WTC11 (cell line): ENCODE measurements at regions of chr15 and their contacts with region 1.

Region 1: GRCh38 chr15:75578948-75579920 is at the start of gene PTPN9:
- DNase-seq: peak; percentile 94
- ATAC-seq: peak; percentile 83
- H3K4me3 Mint-ChIP-seq: peak within 1 kb of the TSS; percentile 97
- H3K27ac Mint-ChIP-seq: peak within 1 kb of the TSS; percentile 96
- H3K4me1 Mint-ChIP-seq: peaks cover 26% of the 10 kb centered on the region
- H3K27me3 Mint-ChIP-seq: no peaks in the 10 kb centered on the region
- CTCF ChIP-seq: no peak
- total RNA-seq, gene PTPN9: 36.1 to 45.5 TPM (median 36.6 TPM) in 3 replicates

Region 2: GRCh38 chr15:75625542-75626347 is 46.5 kb after region 1 on chr15 and contains the start of gene SNUPN:
- CTCF ChIA-PET with region 1: interaction called, 11 read pairs
- POLR2A ChIA-PET with region 1: no interaction called
- DNase-seq: peak; percentile 96
- ATAC-seq: peak; percentile 88
- H3K4me3 Mint-ChIP-seq: peak within 1 kb of the TSS; percentile 91
- H3K27ac Mint-ChIP-seq: peak within 1 kb of the TSS; percentile 98
- H3K4me1 Mint-ChIP-seq: peaks cover 12% of the 10 kb centered on the region
- H3K27me3 Mint-ChIP-seq: no peaks in the 10 kb centered on the region
- CTCF ChIP-seq: no peak
- total RNA-seq, gene SNUPN: 25.9 to 28.4 TPM (median 27.9 TPM) in 3 replicates

Region 3: DNA sequence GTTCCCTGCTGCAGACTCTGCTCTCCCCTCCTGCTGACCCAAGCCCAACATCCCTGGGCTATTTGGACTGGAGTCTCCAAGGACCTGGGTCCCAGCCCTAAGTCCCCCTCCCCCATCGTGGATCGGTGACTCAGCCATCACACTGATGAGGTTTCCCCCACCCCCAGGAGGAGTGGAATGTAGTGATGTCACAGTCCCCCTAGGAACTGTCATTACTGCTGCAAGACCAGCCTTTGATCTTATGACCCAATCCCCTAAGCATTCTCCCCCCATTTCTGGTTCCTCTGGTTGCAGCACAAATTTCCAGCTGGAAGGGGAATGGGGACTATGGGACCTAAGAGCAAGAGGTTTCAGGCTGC is 196.8 kb after region 1 on chr15:
- CTCF ChIA-PET with region 1: no interaction called
- POLR2A ChIA-PET with region 1: no interaction called
- DNase-seq: peak; percentile 36
- ATAC-seq: no peak
- H3K4me3 Mint-ChIP-seq: no peak overlapping the region; the same call in 1 of the 2 replicates
- H3K27ac Mint-ChIP-seq: peak overlapping the region; percentile 67; the same call in 1 of the 2 replicates
- H3K4me1 Mint-ChIP-seq: peaks cover 54% of the 10 kb centered on the region
- H3K27me3 Mint-ChIP-seq: peaks cover 14% of the 10 kb centered on the region
- CTCF ChIP-seq: no peak